Gastrocnemius medialis (tissue), 4 donors: ENCODE measurements at regions of chr1 and their contacts with region 1.

Region 1: GRCh38 chr1:16181887-16182719 is 26.2 kb upstream of the EPHA2 start:
- DNase-seq: peak; percentile 75 to 81
- ATAC-seq: peak; percentile 82 to 86
- H3K4me3 ChIP-seq: peak overlapping the region in 1 of 4 donors; percentile 19
- H3K27ac ChIP-seq: peak overlapping the region; percentile 79 to 89 (median 84)
- H3K4me1 ChIP-seq: peaks cover 9 to 13% of the 10 kb centered on the region in 2 donors
- H3K27me3 ChIP-seq: no peaks in the 10 kb centered on the region
- CTCF ChIP-seq: no peak
- POLR2A ChIP-seq: peak in 1 of 2 donors; percentile 11

Region 2: DNA sequence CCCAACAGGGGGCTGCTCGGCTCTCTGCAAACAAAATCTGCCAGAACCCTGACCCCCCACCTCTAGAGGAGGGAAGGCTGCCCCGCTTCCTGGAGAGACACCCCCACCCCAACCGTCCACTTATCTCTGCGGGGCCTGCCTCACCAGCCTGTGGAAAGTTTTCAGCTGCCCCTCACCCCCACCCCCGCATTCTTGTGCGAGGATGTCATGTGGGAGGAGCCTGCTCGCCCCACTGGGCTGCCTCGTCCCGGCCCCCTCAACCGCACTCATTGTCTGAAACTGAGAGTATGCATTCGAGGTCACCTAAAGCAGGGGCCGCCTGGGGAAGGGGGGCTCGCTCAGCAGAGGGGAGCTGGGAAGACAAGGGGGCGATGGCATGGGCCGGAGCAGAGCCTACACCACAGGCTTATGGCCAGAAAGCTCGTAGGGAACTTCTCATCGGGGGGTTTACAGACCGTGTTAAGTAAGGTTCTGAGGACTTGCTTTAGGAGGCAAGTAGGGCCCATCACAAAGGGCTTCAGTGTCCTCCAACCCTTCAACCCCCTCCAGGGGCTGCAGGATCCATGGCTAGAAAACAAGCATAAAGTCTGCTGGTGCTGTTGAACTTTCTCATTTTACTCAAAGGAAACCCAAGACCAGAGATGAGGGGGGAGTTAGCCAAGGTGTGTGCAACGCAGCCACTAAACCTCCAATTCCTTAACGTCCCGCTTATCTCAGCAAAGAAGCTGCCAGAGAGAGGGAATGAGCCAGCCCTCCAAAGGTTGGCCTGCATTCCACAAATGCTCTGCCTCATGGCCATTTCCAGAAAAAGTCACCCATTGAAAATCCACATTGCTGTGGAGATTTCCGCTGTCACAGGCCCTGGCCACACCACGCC is 35.6 kb before region 1 on chr1:
- in situ Hi-C with region 1: no loop called
- intact Hi-C with region 1: loop called (anchors 5 kb)
- DNase-seq: peak in 1 of 2 donors; percentile 26
- ATAC-seq: peak in 1 of 2 donors; percentile 31
- H3K4me3 ChIP-seq: peak overlapping the region; percentile 26 to 45 (median 38)
- H3K27ac ChIP-seq: peak overlapping the region; percentile 28 to 80 (median 76)
- H3K4me1 ChIP-seq: peaks cover 40 to 42% of the 10 kb centered on the region in 2 donors
- H3K27me3 ChIP-seq: peaks cover 17 to 24% (median 20%) of the 10 kb centered on the region in 3 donors
- CTCF ChIP-seq: no peak
- POLR2A ChIP-seq: peak in 1 of 2 donors; percentile 34

Region 3: GRCh38 chr1:16155532-16156410 is 26.3 kb before region 1 on chr1 and contains the start of gene EPHA2:
- in situ Hi-C with region 1: no loop called
- intact Hi-C with region 1: loop called (anchors 2 kb)
- DNase-seq: peak; percentile 42 to 59
- ATAC-seq: peak; percentile 46 to 63
- H3K4me3 ChIP-seq: peak within 1 kb of the TSS; percentile 64 to 85 (median 70)
- H3K27ac ChIP-seq: peak within 1 kb of the TSS; percentile 74 to 84 (median 80)
- H3K4me1 ChIP-seq: peaks cover 19 to 42% of the 10 kb centered on the region in 2 donors
- H3K27me3 ChIP-seq: peaks cover 4 to 8% (median 5%) of the 10 kb centered on the region in 3 donors
- CTCF ChIP-seq: no peak
- POLR2A ChIP-seq: peak; percentile 48 to 77
- total RNA-seq, gene EPHA2: 1.2 to 6.4 (median 2.9) TPM